ENCODE measurements at regions of chr9 and their contacts with region 1.

Region 1: GRCh38 chr9:37031902-37032301 is 2.2 kb downstream of the PAX5 start:
- DNase-seq: no peak
- ATAC-seq: no peak
- H3K4me3 ChIP-seq: no peak overlapping the region
- H3K27ac ChIP-seq: no peak overlapping the region
- H3K4me1 ChIP-seq: no peaks in the 10 kb centered on the region
- H3K27me3 ChIP-seq: peaks cover 0 to 2% of the 10 kb centered on the region in 2 donors

Region 2: GRCh38 chr9:37042421-37042820 is 10.5 kb after region 1 on chr9:
- intact Hi-C with region 1: loop called in 1 of 2 experiments (anchors 1 kb)
- DNase-seq: no peak
- ATAC-seq: no peak
- H3K4me3 ChIP-seq: no peak overlapping the region
- H3K27ac ChIP-seq: no peak overlapping the region
- H3K4me1 ChIP-seq: peaks cover 0 to 2% of the 10 kb centered on the region in 2 donors
- H3K27me3 ChIP-seq: peaks cover 0 to 3% of the 10 kb centered on the region in 2 donors